ENCODE measurements at regions of chr12 and their contacts with region 1.

Region 1: GRCh38 chr12:27014085-27014858 is at the start of gene TM7SF3:
- DNase-seq: peak; percentile 97
- ATAC-seq: peak; percentile 89
- H3K4me3 Mint-ChIP-seq: peak within 1 kb of the TSS; percentile 91
- H3K27ac Mint-ChIP-seq: peak within 1 kb of the TSS; percentile 94
- H3K4me1 Mint-ChIP-seq: peaks cover 61% of the 10 kb centered on the region
- H3K27me3 Mint-ChIP-seq: no peaks in the 10 kb centered on the region
- total RNA-seq, gene TM7SF3: 41.4 to 45.1 TPM

Region 2: DNA sequence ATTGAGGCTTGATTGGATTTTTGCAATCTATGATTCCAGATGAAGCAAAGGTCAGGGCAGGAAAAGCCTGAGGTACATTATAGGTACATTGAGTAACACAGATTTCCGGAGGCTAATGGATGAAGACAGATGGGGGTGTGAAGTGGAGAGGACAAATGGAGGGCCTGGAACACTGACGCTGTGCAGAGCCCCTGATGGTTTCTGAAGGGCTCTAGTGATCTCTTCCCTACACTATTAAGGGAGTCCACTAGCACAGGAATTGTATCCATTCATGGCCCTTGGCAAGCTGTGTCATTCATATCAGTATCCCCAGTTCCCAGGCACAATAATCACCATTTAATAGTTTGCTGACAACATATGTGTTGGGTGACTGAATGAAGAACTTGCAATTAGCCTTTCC is 466.0 kb before region 1 on chr12:
- CTCF ChIA-PET with region 1: no interaction called
- DNase-seq: no peak
- ATAC-seq: no peak
- H3K4me3 Mint-ChIP-seq: no peak overlapping the region
- H3K27ac Mint-ChIP-seq: no peak overlapping the region
- H3K4me1 Mint-ChIP-seq: peaks cover 2% of the 10 kb centered on the region
- H3K27me3 Mint-ChIP-seq: no peaks in the 10 kb centered on the region

Region 3: DNA sequence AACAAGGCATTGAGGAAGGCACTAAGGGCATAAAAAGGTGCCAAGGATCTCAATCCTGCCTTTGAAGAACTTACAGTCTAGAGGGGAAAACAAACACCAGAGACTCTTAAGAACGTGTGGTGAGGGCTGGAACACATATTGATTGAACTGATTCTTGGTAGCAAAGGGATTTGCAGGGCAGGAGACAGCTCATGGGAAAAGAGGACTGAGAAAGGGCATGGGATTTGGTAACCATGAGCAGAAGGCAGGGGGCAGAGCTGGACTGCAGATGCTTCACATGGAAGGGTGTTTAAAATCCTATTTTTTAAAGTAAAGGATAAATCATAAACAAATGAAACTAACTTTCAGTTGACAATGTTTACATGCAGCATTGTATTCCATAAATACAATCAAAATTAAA is 384.4 kb before region 1 on chr12:
- CTCF ChIA-PET with region 1: no interaction called
- DNase-seq: no peak
- ATAC-seq: no peak
- H3K4me3 Mint-ChIP-seq: no peak overlapping the region
- H3K27ac Mint-ChIP-seq: peak overlapping the region; percentile 37
- H3K4me1 Mint-ChIP-seq: peaks cover 23% of the 10 kb centered on the region
- H3K27me3 Mint-ChIP-seq: no peaks in the 10 kb centered on the region

Region 4: GRCh38 chr12:26786865-26787514 is 227.3 kb before region 1 on chr12:
- CTCF ChIA-PET with region 1: no interaction called
- DNase-seq: no peak
- ATAC-seq: no peak
- H3K4me3 Mint-ChIP-seq: no peak overlapping the region
- H3K27ac Mint-ChIP-seq: no peak overlapping the region
- H3K4me1 Mint-ChIP-seq: peaks cover 25% of the 10 kb centered on the region
- H3K27me3 Mint-ChIP-seq: no peaks in the 10 kb centered on the region

Region 5: DNA sequence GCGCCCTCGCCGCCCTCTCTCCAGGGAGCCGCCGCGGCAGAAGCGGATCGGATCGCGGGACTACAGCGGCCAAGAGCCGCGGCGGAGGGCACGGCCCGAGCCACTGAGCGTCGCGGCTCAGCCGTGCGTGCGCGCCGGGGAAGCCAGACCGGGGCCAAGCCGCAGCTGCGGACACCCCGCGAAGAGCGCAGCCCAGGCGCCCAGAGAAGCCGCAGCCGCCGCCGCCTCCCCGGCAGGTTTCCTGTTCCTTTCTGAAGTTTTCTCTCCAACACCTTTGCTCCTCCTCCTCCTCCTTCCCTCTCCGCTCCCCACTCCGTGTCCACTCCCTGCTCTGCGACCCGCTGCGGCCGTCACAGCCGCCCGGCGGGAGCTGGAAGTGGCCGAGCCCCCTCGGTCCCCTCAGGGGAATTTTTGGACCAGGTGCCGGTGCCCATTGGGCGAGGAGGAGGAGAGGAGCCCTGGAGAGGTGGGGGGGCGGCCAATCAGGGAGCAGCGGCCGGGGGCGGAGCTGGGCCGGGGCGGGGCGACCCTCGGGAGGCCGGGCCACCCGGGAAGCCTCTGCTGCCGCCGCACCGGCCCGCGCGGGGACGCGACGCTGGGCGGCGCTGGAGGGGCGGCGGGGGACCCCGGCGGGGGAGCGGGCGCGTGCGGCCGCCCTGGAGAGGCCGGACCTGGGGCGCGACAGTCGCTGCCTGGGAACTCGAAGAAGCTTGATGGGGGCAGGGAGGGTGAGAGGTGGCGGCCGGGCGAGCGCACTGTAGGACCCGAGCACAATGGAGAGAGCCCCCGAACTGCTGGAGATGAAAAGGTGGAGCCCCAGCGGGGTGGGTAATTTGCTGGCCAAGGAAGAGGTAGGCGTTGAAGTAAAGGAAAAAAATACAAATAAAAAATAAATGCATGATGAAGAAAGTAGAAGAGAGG is 181.2 kb before region 1 on chr12 and contains the start of gene ITPR2:
- CTCF ChIA-PET with region 1: interaction called, 43 read pairs
- DNase-seq: peak; percentile 95
- ATAC-seq: peak; percentile 92
- H3K4me3 Mint-ChIP-seq: peak within 1 kb of the TSS; percentile 94
- H3K27ac Mint-ChIP-seq: peak within 1 kb of the TSS; percentile 99
- H3K4me1 Mint-ChIP-seq: peaks cover 36% of the 10 kb centered on the region
- H3K27me3 Mint-ChIP-seq: no peaks in the 10 kb centered on the region
- total RNA-seq, gene ITPR2: 31.1 to 37.7 TPM

Region 6: GRCh38 chr12:26863502-26863901 is 150.8 kb before region 1 on chr12:
- CTCF ChIA-PET with region 1: no interaction called
- DNase-seq: no peak
- ATAC-seq: no peak
- H3K4me3 Mint-ChIP-seq: no peak overlapping the region
- H3K27ac Mint-ChIP-seq: no peak overlapping the region
- H3K4me1 Mint-ChIP-seq: peaks cover 11% of the 10 kb centered on the region
- H3K27me3 Mint-ChIP-seq: peaks cover under 1% of the 10 kb centered on the region

Region 7: GRCh38 chr12:26936559-26937442 is 77.5 kb before region 1 on chr12:
- CTCF ChIA-PET with region 1: interaction called, 21 read pairs
- DNase-seq: no peak
- ATAC-seq: no peak
- H3K4me3 Mint-ChIP-seq: peak overlapping the region; percentile 98
- H3K27ac Mint-ChIP-seq: peak overlapping the region; percentile 97
- H3K4me1 Mint-ChIP-seq: peaks cover 49% of the 10 kb centered on the region
- H3K27me3 Mint-ChIP-seq: no peaks in the 10 kb centered on the region

Region 8: DNA sequence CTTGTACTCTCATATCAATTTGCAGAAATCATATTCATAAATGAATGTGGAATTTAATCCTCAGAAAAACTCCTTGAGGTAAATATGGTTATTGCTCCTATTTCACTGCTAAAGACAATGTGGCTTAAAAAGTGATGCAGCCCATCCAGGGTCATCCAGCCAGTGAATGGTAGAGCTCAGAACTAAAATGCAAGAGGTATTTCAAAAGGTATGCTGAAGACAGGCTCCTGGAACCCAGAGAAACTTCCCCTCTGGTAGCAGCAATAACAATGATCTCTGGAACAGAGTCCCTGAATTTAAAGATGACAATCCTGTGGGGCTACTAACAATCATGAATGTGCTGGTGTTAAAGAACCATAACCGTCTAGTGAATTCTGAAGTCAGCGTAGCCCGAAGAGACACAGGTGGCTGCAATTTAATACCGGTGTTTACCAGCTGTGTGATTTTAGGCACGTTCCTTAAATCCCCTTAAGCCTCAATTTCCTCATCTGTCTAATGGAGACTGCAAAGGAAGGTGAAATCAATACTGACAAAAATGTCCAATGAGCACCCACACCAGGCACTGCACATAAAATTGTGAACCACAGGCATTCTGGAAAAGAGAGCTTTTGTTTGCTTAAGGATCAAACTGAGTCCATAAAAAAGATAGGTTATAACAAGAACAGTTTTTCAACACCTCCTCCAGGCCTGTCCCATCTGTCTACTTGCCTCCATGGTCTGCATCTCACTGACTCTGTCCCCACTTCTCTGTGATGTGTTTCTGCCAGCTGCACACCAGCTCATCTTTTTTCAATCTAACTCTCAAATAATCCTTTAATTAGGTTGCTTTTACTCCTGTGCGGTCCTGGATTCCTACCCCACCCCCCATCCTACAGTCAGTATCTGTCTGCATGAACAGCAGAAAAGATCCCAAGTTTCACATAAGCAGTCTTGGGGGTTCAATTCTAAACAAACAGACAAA is 10.6 kb before region 1 on chr12:
- CTCF ChIA-PET with region 1: interaction called, 26 read pairs
- DNase-seq: no peak
- ATAC-seq: no peak
- H3K4me3 Mint-ChIP-seq: no peak overlapping the region
- H3K27ac Mint-ChIP-seq: no peak overlapping the region
- H3K4me1 Mint-ChIP-seq: peaks cover 23% of the 10 kb centered on the region
- H3K27me3 Mint-ChIP-seq: no peaks in the 10 kb centered on the region

Region 9: DNA sequence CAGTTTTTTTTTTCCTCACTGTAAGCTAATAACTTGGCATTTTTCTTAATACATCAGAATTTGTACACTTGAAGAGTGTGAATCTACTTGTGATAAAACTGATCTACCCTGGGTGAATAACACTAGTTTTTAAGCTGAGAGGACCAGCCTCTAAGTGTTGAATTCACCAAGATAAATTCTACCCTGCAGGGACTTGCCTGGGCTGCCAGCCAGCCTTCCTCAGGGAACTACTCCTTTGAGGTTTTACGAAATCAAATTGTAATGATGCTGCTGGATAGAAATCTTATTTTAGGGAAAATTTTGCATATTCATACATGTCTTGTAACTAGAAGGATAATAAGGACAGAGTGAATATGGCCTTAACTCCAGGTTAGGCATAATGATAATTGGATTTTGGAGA is 10.0 kb after region 1 on chr12:
- CTCF ChIA-PET with region 1: interaction called, 11 read pairs
- DNase-seq: no peak
- ATAC-seq: no peak
- H3K4me3 Mint-ChIP-seq: no peak overlapping the region
- H3K27ac Mint-ChIP-seq: no peak overlapping the region
- H3K4me1 Mint-ChIP-seq: peaks cover 33% of the 10 kb centered on the region
- H3K27me3 Mint-ChIP-seq: peaks cover 2% of the 10 kb centered on the region

Measured in activated CD8-positive, alpha-beta memory T cell treated with anti-CD3 and anti-CD28 coated beads, Interleukin-2, amount 10 ng/mL, durations not matched to agents 7 days and 5 days (primary cell).